CD4-positive, alpha-beta memory T cell (primary cell): ENCODE measurements at regions of chrX and their contacts with region 1.

Region 1: GRCh38 chrX:154515878-154516655 is at the start of gene FAM3A:
- DNase-seq: peak; percentile 87 to 90 (median 89)
- H3K4me3 ChIP-seq: peak within 1 kb of the TSS; percentile 42 to 56
- H3K4me3 Mint-ChIP-seq: peak within 1 kb of the TSS; percentile 83 to 88 (median 85)
- H3K27ac ChIP-seq: peak within 1 kb of the TSS; percentile 81
- H3K27ac Mint-ChIP-seq: peak within 1 kb of the TSS; percentile 74 to 95 (median 92)
- H3K4me1 ChIP-seq: peaks cover 18% of the 10 kb centered on the region
- H3K4me1 Mint-ChIP-seq: peaks cover 10 to 30% (median 17%) of the 10 kb centered on the region in 4 donors
- H3K27me3 ChIP-seq: no peaks in the 10 kb centered on the region
- H3K27me3 Mint-ChIP-seq: no peaks in the 10 kb centered on the region
- total RNA-seq, gene FAM3A: 51.0 to 51.8 TPM

Region 2: DNA sequence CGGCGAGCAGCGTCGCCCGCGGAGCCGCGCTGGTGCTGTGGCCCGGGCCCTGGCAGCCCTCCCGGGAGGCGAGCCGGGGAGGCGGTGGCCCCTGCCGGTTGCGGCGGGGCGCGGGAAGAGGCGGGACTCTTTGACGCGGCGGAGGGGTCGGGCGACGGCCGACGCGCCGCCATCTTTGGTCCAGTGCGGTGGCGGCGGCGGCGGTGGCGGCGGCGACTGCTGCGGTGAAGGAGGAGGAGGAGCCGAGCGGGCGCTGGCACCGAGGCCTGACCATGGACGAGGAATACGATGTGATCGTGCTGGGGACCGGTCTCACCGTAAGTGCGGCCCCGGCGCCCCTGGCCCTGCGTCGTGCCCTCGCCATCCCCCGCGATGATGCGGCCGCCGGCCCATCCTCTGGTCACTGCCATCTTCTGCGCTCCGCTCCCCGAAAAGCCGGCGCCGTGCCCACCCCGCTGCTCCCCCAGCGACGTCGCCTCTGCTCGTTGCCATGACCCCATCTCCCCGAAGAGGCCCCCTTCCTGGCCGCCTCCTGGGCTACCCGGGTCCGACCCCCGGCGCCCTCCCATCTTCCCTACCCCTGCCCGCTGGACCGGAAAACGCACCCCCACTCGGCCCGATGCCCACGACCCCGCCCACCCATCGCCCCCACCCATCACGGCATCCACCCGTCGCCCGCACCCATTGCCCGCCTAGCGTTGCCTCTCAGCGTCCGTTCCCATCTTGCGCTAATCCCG is 78.9 kb before region 1 on chrX and contains the start of gene GDI1:
- CTCF ChIA-PET with region 1: no interaction called
- POLR2A ChIA-PET with region 1: interaction called, 6 read pairs
- intact Hi-C with region 1: loop called (anchors 5 kb)
- DNase-seq: peak; percentile 59 to 69 (median 65)
- H3K4me3 ChIP-seq: peak within 1 kb of the TSS; percentile 29 to 40
- H3K4me3 Mint-ChIP-seq: peak within 1 kb of the TSS; percentile 86 to 89 (median 88)
- H3K27ac ChIP-seq: peak within 1 kb of the TSS; percentile 82
- H3K27ac Mint-ChIP-seq: peak within 1 kb of the TSS; percentile 84 to 98 (median 94)
- H3K4me1 ChIP-seq: peaks cover 39% of the 10 kb centered on the region
- H3K4me1 Mint-ChIP-seq: peaks cover 11 to 37% (median 23%) of the 10 kb centered on the region in 4 donors
- H3K27me3 ChIP-seq: no peaks in the 10 kb centered on the region
- H3K27me3 Mint-ChIP-seq: no peaks in the 10 kb centered on the region
- total RNA-seq, gene GDI1: 212 to 220 TPM

Region 3: DNA sequence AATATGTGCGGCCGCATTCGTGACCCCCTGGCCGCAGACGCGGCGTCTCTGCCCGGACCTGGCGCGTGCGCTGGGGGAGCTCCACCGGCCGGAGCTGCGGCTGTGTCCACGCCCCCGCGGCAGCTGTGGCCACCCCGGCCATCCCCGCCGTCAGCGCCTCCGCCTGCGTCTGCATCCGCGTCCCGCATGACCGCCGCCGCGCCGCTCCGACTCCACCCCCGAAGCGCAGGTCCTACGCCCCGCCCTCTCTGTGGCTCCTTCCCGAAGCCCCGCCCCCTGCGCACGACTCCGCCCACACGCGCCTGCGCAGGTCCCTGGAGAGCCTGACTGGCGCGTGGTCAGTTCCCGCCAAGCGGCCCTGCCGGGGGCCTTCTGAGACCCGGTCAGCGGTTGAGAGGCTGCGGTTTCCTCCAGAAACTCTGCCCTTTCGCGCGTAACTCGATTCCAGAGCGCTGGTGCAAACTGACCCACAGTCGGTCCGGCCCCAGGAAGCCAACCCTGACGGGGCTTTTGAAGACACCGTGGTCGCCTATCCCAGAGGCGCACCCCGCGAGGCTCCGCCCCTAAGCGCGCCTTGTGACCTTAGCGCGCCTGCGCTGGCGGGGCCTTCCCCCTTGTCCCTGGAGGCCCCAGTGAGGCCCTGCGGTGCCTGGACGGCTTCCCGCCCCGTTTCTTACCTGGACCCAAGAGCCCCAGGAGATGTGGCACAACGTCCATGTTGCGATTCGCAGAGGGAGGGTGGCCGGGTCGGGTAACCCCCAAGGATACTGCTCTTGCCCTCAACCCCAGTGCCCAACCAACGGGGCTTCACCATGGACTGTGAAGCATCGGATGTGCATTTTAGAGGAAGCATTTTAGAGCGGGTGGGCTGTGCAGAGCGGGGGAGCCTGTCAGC is 37.1 kb before region 1 on chrX and contains the start of gene LAGE3:
- CTCF ChIA-PET with region 1: no interaction called
- POLR2A ChIA-PET with region 1: interaction called, 5 read pairs
- intact Hi-C with region 1: loop called (anchors 1 kb)
- DNase-seq: peak; percentile 89 to 96 (median 94)
- H3K4me3 ChIP-seq: peak within 1 kb of the TSS in 1 of 2 donors; percentile 55
- H3K4me3 Mint-ChIP-seq: peak within 1 kb of the TSS; percentile 78 to 87 (median 83)
- H3K27ac ChIP-seq: peak within 1 kb of the TSS; percentile 76
- H3K27ac Mint-ChIP-seq: peak within 1 kb of the TSS; percentile 87 to 97 (median 91)
- H3K4me1 ChIP-seq: peaks cover 21% of the 10 kb centered on the region
- H3K4me1 Mint-ChIP-seq: peaks cover 5 to 19% (median 10%) of the 10 kb centered on the region in 4 donors
- H3K27me3 ChIP-seq: no peaks in the 10 kb centered on the region
- H3K27me3 Mint-ChIP-seq: no peaks in the 10 kb centered on the region
- total RNA-seq, gene LAGE3: 18.5 to 19.3 TPM

Region 4: DNA sequence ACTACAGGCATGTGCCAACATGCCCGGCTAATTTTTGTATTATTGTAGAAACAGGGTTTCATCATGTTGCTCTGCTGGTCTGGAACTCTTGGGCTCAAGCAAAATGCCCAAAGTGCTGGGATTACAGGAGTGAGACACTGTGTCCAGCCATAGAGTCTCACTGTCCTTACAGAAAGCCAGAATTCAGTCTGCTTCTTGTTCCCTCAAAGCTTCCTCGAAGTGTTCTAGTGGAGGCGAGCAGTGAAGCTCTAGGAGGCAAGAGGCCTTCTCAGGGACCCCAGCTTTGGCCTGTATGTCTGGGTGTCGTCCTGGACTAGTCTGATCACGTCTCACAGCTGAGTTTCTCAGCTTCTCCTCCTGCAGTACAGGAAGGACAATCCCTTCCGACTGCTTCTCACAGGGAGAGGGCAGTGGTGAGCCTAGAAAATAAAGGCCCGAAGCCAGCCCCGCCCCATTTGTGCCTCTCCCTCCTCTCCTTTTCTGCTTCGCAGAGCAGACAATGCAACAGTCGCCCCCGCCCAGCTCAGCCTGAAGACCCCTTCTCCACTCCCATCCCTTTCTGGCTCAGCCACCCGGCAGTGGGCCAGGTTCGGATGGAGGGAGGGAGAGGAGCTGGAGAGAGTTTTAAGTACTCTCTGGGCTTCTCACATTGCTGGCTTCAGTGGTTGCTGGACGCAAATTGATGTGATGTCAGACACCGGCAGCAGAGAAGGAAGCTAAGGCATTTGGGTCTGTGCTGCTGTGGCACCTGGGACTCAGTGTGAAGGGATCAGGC is 11.0 kb after region 1 on chrX:
- CTCF ChIA-PET with region 1: interaction called, 7 read pairs
- POLR2A ChIA-PET with region 1: interaction called, 18 read pairs
- intact Hi-C with region 1: no loop called
- DNase-seq: peak; percentile 43 to 65 (median 47)
- H3K4me3 ChIP-seq: no peak overlapping the region
- H3K4me3 Mint-ChIP-seq: peak overlapping the region in 5 of 8 donors; percentile 12 to 63 (median 52)
- H3K27ac ChIP-seq: peak overlapping the region; percentile 31
- H3K27ac Mint-ChIP-seq: peak overlapping the region in 6 of 7 donors; percentile 22 to 77 (median 68)
- H3K4me1 ChIP-seq: peaks cover 23% of the 10 kb centered on the region
- H3K4me1 Mint-ChIP-seq: peaks cover 11 to 23% (median 16%) of the 10 kb centered on the region in 4 donors
- H3K27me3 ChIP-seq: no peaks in the 10 kb centered on the region
- H3K27me3 Mint-ChIP-seq: no peaks in the 10 kb centered on the region